ENCODE measurements at regions of chr1 and their contacts with region 1.

Region 1: DNA sequence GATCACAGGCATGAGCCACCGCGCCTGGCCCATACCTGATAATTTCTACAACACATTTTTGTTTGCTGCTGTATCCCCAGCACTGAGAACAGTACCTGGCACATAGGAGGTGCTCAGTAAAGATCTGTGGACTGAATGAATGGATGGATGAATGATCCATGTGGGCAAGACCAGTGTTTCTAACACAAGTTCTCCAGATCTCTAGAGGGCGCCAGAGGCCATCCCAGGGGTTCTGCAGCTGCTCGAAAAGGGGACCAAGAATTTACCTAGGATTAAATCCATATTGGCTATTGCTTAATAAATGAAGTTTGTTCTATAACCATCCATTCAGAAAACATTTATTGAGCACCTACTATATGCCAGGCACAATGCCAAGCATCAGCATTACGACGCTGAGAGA is 167.7 kb downstream of the ACTL8 start:
- DNase-seq: peak; percentile 49

Region 2: GRCh38 chr1:17837233-17838030 is 85.4 kb before region 1 on chr1:
- CTCF ChIA-PET with region 1: no interaction called
- POLR2A ChIA-PET with region 1: no interaction called
- DNase-seq: no peak

Region 3: DNA sequence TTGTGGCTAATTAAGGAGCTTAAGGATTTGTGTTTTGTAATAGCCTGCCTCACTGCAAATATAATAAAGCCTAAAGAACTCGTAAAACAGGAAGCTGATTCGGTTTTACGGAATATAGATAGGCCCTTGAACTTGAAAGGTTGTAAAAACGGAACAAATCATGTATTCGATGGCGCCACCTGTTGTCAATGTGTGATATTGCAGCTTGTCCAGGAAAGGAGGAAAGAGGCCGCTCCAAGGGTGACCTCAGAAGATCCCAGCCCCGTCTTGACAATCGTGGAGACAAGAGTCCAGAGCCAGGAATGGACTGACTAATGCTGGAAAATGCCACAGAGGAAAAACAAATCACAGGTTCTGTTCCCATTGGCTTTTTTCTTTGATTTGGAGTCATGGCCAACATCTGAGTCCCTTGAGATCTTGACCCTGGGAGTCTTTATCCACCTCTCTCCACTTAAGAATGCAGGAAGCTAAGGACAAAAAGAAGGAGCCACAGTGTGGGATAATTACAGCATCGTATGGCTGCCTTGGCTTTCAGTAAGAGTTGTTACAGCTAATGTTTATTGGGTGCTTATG is 177.7 kb after region 1 on chr1:
- CTCF ChIA-PET with region 1: interaction called, 11 read pairs
- POLR2A ChIA-PET with region 1: no interaction called
- DNase-seq: peak; percentile 74

Measured in HEK293T (cell line).